ENCODE measurements at regions of chr11 and their contacts with region 1.

Region 1: DNA sequence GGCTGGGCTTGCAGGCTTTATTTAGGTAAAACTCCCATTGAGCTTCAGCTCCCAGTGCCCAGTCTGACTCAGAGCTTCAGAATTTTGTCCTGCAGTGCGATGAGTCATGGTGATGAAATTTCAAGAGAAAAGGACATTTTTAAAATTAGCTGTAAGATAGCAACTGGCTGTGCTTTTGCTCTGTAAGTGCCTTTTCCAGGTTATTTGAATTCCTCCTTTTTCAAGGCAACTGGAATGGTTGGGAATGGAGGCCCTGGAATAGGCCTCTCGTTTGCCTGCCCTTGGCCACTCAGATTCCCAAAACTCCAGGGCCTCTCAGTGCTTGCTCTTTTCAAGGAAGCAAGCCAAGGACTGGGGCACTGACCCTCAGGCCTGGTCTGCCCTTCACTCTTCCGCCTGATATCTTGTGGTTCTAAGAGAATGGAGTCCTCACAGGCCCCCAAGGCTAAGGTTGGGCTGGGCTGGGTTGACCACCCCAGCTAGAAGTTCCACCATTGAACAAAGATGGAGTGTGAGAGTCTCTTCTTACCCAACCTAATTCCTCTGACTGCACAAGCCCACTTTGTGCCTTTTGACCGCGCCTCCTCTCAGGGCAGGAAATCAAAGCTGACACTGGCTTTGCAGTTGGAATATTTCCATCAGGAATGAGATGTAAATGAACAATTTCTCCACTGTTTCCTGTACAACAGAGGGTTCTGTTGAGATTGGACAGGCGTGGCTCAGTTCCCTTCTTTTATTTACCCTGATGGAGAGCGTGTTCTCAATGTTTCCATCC is 59.4 kb upstream of the PRSS23 start:
- DNase-seq: peak; percentile 81 to 82
- H3K4me3 ChIP-seq: no peak overlapping the region
- H3K4me3 Mint-ChIP-seq: peak overlapping the region; percentile 18
- H3K27ac Mint-ChIP-seq: peak overlapping the region; percentile 97
- H3K4me1 ChIP-seq: peaks cover 83% of the 10 kb centered on the region
- H3K4me1 Mint-ChIP-seq: peaks cover 80% of the 10 kb centered on the region
- H3K27me3 ChIP-seq: no peaks in the 10 kb centered on the region
- H3K27me3 Mint-ChIP-seq: no peaks in the 10 kb centered on the region
- CTCF ChIP-seq: no peak

Region 2: GRCh38 chr11:86511086-86511551 is 229.8 kb before region 1 on chr11:
- CTCF ChIA-PET with region 1: no interaction called
- POLR2A ChIA-PET with region 1: no interaction called
- intact Hi-C with region 1: no loop called
- DNase-seq: no peak
- H3K4me3 ChIP-seq: no peak overlapping the region
- H3K4me3 Mint-ChIP-seq: no peak overlapping the region
- H3K27ac Mint-ChIP-seq: no peak overlapping the region
- H3K4me1 ChIP-seq: peaks cover 91% of the 10 kb centered on the region
- H3K4me1 Mint-ChIP-seq: peaks cover 3% of the 10 kb centered on the region
- H3K27me3 ChIP-seq: no peaks in the 10 kb centered on the region
- H3K27me3 Mint-ChIP-seq: no peaks in the 10 kb centered on the region
- CTCF ChIP-seq: no peak

Region 3: DNA sequence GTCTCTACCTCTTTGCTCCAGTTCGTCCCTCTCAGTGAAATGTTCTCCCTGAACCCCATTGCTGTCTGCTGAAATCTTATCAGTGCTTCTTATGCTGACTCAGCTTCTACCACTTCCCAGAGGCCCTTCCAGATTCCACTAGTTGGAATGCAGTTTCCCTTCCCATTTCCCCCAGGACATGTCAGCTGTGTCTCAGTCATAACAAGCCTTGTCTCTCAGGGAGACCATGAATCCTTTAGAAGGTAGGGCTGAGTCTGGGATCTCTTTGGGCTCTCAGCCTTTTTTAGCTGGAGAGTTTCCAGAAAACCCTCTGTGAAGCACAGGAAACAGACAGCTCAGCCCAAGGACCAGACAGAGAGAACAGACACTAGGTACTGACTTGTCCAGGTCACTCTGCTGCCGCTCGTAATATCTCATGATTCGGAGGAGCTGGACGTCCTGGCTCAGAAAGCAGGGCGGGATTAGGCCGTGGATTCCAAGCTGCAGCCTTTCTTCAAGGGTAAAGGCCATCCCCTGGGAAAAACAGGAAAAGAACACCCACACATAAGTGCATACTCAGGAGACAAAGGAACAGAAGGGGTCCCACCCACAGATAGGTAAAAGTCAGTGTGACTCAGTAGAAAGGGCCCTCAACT is 181.5 kb before region 1 on chr11:
- CTCF ChIA-PET with region 1: no interaction called
- POLR2A ChIA-PET with region 1: no interaction called
- intact Hi-C with region 1: no loop called
- DNase-seq: peak; percentile 66 to 75
- H3K4me3 ChIP-seq: no peak overlapping the region
- H3K4me3 Mint-ChIP-seq: no peak overlapping the region
- H3K27ac Mint-ChIP-seq: peak overlapping the region; percentile 66
- H3K4me1 ChIP-seq: peaks cover 19% of the 10 kb centered on the region
- H3K4me1 Mint-ChIP-seq: peaks cover 25% of the 10 kb centered on the region
- H3K27me3 ChIP-seq: no peaks in the 10 kb centered on the region
- H3K27me3 Mint-ChIP-seq: no peaks in the 10 kb centered on the region
- CTCF ChIP-seq: no peak

Region 4: GRCh38 chr11:86719781-86720463 is 21.0 kb before region 1 on chr11:
- CTCF ChIA-PET with region 1: no interaction called
- POLR2A ChIA-PET with region 1: no interaction called
- intact Hi-C with region 1: loop called (anchors 2 kb)
- DNase-seq: no peak
- H3K4me3 ChIP-seq: no peak overlapping the region
- H3K4me3 Mint-ChIP-seq: peak overlapping the region; percentile 2
- H3K27ac Mint-ChIP-seq: peak overlapping the region; percentile 81
- H3K4me1 ChIP-seq: peaks cover 47% of the 10 kb centered on the region
- H3K4me1 Mint-ChIP-seq: peaks cover 41% of the 10 kb centered on the region
- H3K27me3 ChIP-seq: no peaks in the 10 kb centered on the region
- H3K27me3 Mint-ChIP-seq: no peaks in the 10 kb centered on the region
- CTCF ChIP-seq: no peak

Region 5: DNA sequence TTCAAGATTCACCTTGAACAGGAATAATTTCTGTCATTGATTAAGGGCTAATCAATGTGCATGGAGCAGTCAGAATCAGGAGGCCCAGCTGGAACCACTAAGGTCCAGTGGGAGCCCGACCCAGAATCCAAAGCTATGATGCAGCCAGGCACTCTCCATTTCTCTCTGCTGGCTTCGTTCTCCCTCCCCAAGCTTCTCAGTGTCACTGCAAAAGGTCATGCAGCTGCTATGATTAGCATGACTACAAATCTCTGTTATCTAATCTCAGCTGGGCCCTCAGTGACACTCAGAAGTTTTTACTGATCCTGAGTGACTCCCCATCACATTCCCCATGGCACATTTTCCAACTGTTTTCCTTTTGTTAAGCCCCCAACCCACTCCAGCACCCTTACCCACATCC is 28.3 kb after region 1 on chr11:
- CTCF ChIA-PET with region 1: no interaction called
- POLR2A ChIA-PET with region 1: no interaction called
- intact Hi-C with region 1: loop called (anchors 2 kb)
- DNase-seq: peak; percentile 55 to 62
- H3K4me3 ChIP-seq: no peak overlapping the region
- H3K4me3 Mint-ChIP-seq: peak overlapping the region; percentile 1
- H3K27ac Mint-ChIP-seq: peak overlapping the region; percentile 48
- H3K4me1 ChIP-seq: peaks cover 47% of the 10 kb centered on the region
- H3K4me1 Mint-ChIP-seq: peaks cover 44% of the 10 kb centered on the region
- H3K27me3 ChIP-seq: no peaks in the 10 kb centered on the region
- H3K27me3 Mint-ChIP-seq: no peaks in the 10 kb centered on the region
- CTCF ChIP-seq: no peak

Region 6: DNA sequence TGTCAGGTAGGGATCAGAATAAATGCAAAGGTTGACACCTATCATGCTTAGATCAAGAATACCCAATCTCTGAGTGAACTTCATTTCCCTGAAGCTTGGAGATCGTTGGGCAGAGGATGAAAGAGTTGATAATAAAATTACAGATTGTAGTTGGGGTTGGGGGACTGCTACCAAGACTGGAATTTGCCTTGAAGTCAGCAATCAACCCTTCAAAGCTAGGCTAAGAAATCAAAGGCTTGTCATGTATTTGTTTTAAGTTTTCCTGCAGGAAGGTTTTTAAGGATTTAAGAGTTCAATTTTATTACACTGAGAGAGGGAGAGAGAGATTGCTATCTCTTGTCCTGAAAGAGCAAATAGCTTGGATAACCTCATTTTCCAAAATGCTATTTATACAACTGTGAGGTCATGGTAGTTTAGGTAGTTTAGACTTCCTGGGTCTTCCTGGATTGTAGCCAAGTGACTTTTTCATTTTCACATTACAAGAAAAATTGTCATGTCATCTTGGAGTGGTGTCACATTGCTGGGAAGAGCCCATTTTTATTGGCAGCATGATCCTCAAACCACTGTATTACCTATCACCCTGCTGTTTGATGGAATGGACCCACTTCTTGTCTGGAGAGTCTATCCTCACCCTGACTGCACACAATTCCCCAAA is 49.3 kb after region 1 on chr11:
- CTCF ChIA-PET with region 1: no interaction called
- POLR2A ChIA-PET with region 1: no interaction called
- intact Hi-C with region 1: loop called (anchors 2 kb)
- DNase-seq: peak; percentile 65 to 72
- H3K4me3 ChIP-seq: no peak overlapping the region
- H3K4me3 Mint-ChIP-seq: peak overlapping the region; percentile 30
- H3K27ac Mint-ChIP-seq: peak overlapping the region; percentile 79
- H3K4me1 ChIP-seq: peaks cover 88% of the 10 kb centered on the region
- H3K4me1 Mint-ChIP-seq: peaks cover 75% of the 10 kb centered on the region
- H3K27me3 ChIP-seq: no peaks in the 10 kb centered on the region
- H3K27me3 Mint-ChIP-seq: no peaks in the 10 kb centered on the region
- CTCF ChIP-seq: no peak